Natural killer cell (primary cell): ENCODE measurements at regions of chr6 and their contacts with region 1.

Region 1: DNA sequence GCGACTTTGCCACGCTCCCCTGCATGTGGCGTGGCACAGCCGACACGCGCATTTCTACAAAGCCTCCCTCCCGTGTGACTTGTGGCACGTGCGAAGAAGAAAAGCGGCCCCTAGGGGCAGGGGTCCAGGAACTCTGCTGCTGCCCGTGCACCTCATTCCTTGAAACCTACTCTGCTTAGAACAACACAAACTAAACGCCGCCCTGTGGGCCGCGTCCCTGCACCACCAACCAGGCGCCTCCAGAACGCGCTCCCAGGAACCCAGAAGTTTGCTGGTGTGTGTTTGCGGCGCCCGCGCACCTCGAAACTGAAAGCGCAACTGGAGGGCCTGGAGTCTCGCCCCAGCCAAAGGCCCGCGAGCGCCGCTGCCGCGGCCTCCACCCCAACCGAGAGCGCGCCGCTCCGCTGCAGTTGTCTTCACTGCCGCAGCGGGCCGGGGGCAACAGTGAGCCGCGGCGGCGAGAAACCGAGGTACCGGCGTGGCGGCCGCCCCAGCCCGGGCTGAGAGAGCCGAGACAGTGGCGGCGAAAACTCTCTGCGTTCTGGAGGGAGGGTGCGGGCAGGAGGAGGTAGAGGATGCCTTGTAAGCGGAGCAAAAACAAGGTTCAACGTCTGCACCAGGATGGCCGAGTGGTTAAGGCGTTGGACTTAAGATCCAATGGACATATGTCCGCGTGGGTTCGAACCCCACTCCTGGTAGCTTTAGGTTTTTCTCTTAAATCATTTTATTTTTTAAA is 65.8 kb downstream of the STX11 start:
- DNase-seq: peak; percentile 91 to 96
- ATAC-seq: peak; percentile 84 to 93 (median 86)
- H3K4me3 ChIP-seq: peak overlapping the region; percentile 78
- H3K4me3 Mint-ChIP-seq: peak overlapping the region; percentile 97
- H3K27ac ChIP-seq: peak overlapping the region; percentile 84
- H3K27ac Mint-ChIP-seq: peak overlapping the region; percentile 97 to 100
- H3K4me1 ChIP-seq: peaks cover 24% of the 10 kb centered on the region
- H3K4me1 Mint-ChIP-seq: peaks cover 37 to 40% of the 10 kb centered on the region in 2 donors
- H3K27me3 ChIP-seq: no peaks in the 10 kb centered on the region
- H3K27me3 Mint-ChIP-seq: peaks cover 8 to 10% of the 10 kb centered on the region in 2 donors
- CTCF ChIP-seq: peak; percentile 48

Region 2: DNA sequence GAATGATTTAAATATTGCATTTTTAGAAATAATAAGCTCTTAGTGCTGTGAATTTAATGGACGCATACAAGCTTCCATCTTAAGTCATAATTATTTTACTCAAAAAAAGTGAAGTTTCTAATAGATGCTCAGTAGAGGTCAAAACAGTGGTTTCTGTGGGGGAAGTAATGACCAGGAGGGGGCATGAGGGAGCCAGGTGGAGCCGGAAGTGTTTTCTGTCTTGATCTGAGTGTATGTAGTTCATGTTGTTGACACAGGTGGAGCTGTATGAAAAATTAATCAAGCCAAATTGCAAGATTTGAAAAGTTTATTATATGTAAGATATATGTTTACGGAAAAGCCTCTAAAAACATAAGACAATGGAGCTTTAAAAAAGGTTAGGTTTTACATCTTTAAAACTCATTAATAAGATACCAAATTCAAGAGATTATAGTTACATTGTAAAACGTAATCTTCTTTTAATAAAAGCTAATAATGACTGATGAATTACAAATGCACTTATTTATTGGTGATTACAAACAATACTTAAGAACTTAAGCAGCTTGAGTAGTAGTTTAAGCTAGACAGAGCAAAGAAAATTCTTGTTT is 276.0 kb before region 1 on chr6:
- intact Hi-C with region 1: loop called (anchors 2 kb)
- DNase-seq: peak; percentile 30 to 78
- ATAC-seq: peak; percentile 84 to 98 (median 96)
- H3K4me3 ChIP-seq: no peak overlapping the region
- H3K4me3 Mint-ChIP-seq: no peak overlapping the region
- H3K27ac ChIP-seq: no peak overlapping the region
- H3K27ac Mint-ChIP-seq: no peak overlapping the region
- H3K4me1 ChIP-seq: peaks cover 7% of the 10 kb centered on the region
- H3K4me1 Mint-ChIP-seq: peaks cover 10 to 15% of the 10 kb centered on the region in 2 donors
- H3K27me3 ChIP-seq: no peaks in the 10 kb centered on the region
- H3K27me3 Mint-ChIP-seq: no peaks in the 10 kb centered on the region
- CTCF ChIP-seq: peak; percentile 76

Region 3: GRCh38 chr6:144104898-144105487 is 111.1 kb before region 1 on chr6:
- intact Hi-C with region 1: loop called (anchors 1 kb)
- DNase-seq: peak in 1 of 2 donors; percentile 85
- ATAC-seq: peak; percentile 79 to 88 (median 87)
- H3K4me3 ChIP-seq: no peak overlapping the region
- H3K4me3 Mint-ChIP-seq: no peak overlapping the region
- H3K27ac ChIP-seq: no peak overlapping the region
- H3K27ac Mint-ChIP-seq: peak overlapping the region in 1 of 2 donors; percentile 32
- H3K4me1 ChIP-seq: no peaks in the 10 kb centered on the region
- H3K4me1 Mint-ChIP-seq: peaks cover 5% of the 10 kb centered on the region in 2 donors
- H3K27me3 ChIP-seq: no peaks in the 10 kb centered on the region
- H3K27me3 Mint-ChIP-seq: no peaks in the 10 kb centered on the region
- CTCF ChIP-seq: peak; percentile 94

Region 4: GRCh38 chr6:144411332-144412190 is 195.5 kb after region 1 on chr6:
- intact Hi-C with region 1: no loop called
- DNase-seq: peak in 1 of 2 donors; percentile 28
- ATAC-seq: peak; percentile 46 to 59 (median 54)
- H3K4me3 ChIP-seq: no peak overlapping the region
- H3K4me3 Mint-ChIP-seq: peak overlapping the region; percentile 83
- H3K27ac ChIP-seq: no peak overlapping the region
- H3K27ac Mint-ChIP-seq: peak overlapping the region; percentile 84 to 91
- H3K4me1 ChIP-seq: peaks cover 26% of the 10 kb centered on the region
- H3K4me1 Mint-ChIP-seq: peaks cover 81 to 86% of the 10 kb centered on the region in 2 donors
- H3K27me3 ChIP-seq: no peaks in the 10 kb centered on the region
- H3K27me3 Mint-ChIP-seq: no peaks in the 10 kb centered on the region
- CTCF ChIP-seq: no peak

Region 5: GRCh38 chr6:144482142-144482541 is 266.0 kb after region 1 on chr6:
- intact Hi-C with region 1: loop called (anchors 5 kb)
- DNase-seq: peak; percentile 54 to 83
- ATAC-seq: peak; percentile 56 to 86 (median 78)
- H3K4me3 ChIP-seq: no peak overlapping the region
- H3K4me3 Mint-ChIP-seq: no peak overlapping the region
- H3K27ac ChIP-seq: no peak overlapping the region
- H3K27ac Mint-ChIP-seq: peak overlapping the region; percentile 56 to 72
- H3K4me1 ChIP-seq: no peaks in the 10 kb centered on the region
- H3K4me1 Mint-ChIP-seq: peaks cover 19 to 37% of the 10 kb centered on the region in 2 donors
- H3K27me3 ChIP-seq: no peaks in the 10 kb centered on the region
- H3K27me3 Mint-ChIP-seq: no peaks in the 10 kb centered on the region
- CTCF ChIP-seq: peak; percentile 71